Activated CD8-positive, alpha-beta memory T cell treated with anti-CD3 and anti-CD28 coated beads, Interleukin-2, amount 10 ng/mL, durations not matched to agents 7 days and 5 days (primary cell): ENCODE measurements at regions of chr14 and their contacts with region 1.

Region 1: GRCh38 chr14:22099942-22100763 is 426.5 kb upstream of the OR4E1 start:
- DNase-seq: peak; percentile 70
- ATAC-seq: peak; percentile 69
- H3K4me3 Mint-ChIP-seq: no peak overlapping the region
- H3K27ac Mint-ChIP-seq: peak overlapping the region; percentile 40
- H3K4me1 Mint-ChIP-seq: peaks cover 35% of the 10 kb centered on the region
- H3K27me3 Mint-ChIP-seq: no peaks in the 10 kb centered on the region

Region 2: GRCh38 chr14:22047115-22047514 is 53.0 kb before region 1 on chr14:
- CTCF ChIA-PET with region 1: interaction called, 19 read pairs
- DNase-seq: peak; percentile 55
- ATAC-seq: peak; percentile 89
- H3K4me3 Mint-ChIP-seq: peak overlapping the region; percentile 36
- H3K27ac Mint-ChIP-seq: peak overlapping the region; percentile 78
- H3K4me1 Mint-ChIP-seq: peaks cover 38% of the 10 kb centered on the region
- H3K27me3 Mint-ChIP-seq: no peaks in the 10 kb centered on the region

Region 3: DNA sequence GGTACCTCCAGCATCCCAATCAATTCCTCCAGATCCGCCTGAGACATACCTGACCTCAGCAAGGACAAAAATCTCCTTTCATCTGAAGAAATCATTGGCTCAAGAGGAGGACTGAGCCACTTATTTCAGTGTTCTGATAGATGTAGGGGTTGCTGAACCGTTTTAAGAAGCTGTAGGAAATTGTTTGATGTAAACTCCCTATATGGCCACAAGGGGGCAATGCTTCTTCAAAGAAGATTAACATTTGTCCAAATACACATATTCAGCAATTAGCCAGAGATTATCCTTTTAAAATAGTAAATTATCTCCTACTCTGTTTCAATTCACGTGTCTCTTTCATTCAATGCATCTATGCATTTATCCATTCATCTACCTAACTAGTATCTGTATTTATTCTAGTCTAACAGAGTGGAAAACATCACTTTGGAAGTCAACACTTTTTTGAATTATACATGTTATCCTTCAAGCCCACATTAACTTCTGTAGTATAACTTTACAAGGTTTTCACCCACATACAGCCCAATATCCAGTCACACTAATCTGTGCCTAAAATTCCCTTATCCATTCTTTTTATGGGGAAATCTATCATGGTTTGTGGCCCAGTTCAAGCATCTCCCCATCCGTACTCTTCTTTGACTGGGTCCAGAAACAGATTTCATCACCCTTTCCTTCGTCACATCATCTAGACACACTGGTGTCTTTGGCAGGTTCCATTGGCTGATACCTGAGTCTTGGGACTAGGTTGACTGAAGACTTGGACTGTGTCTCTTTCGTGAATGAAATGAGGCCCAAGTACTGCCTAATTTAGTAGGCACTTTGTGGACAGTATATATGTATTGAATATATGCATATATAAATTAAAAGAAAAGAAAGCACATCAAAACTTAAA is 15.5 kb before region 1 on chr14:
- CTCF ChIA-PET with region 1: interaction called, 18 read pairs
- DNase-seq: no peak
- ATAC-seq: peak; percentile 45
- H3K4me3 Mint-ChIP-seq: peak overlapping the region; percentile 49
- H3K27ac Mint-ChIP-seq: peak overlapping the region; percentile 77
- H3K4me1 Mint-ChIP-seq: peaks cover 21% of the 10 kb centered on the region
- H3K27me3 Mint-ChIP-seq: no peaks in the 10 kb centered on the region